ENCODE measurements at regions of chr3 and their contacts with region 1.

Region 1: DNA sequence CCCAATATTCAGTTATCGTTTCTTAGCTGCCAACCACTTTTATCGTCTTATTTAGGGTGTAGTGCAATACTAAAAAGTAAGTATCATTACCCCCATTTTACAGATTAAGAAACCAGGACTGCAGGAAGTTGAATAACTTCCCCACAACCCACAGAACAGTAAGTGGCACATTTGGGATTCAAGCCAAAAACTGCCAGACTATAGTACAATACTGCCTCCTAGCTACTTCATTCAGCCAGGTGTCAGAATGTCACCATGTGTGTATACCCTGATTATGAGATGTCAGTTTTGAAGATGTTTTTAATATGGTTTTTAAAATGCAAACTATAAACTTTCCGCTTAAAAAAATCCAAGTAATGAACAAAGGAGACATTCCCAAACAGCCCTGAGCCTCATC is 74.2 kb upstream of the PROK2 start:
- DNase-seq: peak; percentile 55
- H3K4me3 ChIP-seq: no peak overlapping the region
- H3K27ac ChIP-seq: no peak overlapping the region
- H3K4me1 ChIP-seq: no peaks in the 10 kb centered on the region
- H3K27me3 ChIP-seq: no peaks in the 10 kb centered on the region
- CTCF ChIP-seq: peak; percentile 50

Region 2: DNA sequence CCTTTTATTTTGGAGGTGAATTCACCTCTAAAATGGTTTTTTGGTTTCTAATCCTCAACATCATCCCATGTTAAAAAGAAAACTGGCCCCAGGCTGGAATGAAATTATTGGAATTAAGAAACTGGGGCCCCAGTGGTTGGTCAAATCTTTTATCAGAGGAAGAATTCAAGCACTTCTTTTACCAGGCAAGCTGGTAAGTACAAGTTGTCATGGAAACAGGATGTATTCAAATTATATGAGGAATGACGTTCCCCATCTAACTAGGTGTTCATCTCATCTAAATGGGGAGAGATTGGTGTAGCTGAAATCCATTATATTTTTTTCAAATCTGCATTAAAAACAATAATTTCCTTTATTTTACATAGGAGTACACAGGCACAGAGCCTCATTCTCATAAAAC is 124.2 kb before region 1 on chr3:
- CTCF ChIA-PET with region 1: no interaction called
- POLR2A ChIA-PET with region 1: no interaction called
- intact Hi-C with region 1: loop called (anchors 5 kb)
- DNase-seq: no peak
- H3K4me3 ChIP-seq: no peak overlapping the region
- H3K27ac ChIP-seq: no peak overlapping the region
- H3K4me1 ChIP-seq: no peaks in the 10 kb centered on the region
- H3K27me3 ChIP-seq: no peaks in the 10 kb centered on the region
- CTCF ChIP-seq: no peak